Right ventricle myocardium inferior (tissue), 1 donor: ENCODE measurements at regions of chr9 and their contacts with region 1.

Region 1: DNA sequence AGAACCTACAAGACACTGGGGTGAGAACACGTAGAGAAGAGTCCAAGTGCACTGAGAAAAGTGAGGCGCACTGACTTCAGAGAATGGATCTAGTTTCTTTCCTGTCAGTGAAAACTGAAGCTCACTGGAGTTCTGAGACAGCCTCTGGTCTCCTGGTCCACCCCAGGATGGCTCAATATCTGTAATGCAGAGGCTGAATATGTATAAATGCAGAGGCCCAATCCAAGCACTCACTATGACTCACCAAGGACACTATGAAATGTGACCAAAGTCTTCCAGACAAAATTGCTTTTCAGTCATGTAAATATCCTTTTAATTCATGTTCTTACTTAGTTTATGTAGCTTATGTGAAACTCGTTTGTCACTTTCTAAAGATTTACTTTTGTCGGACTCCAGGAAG is 53.8 kb downstream of the NFIB start:
- DNase-seq: no peak
- ATAC-seq: no peak

Region 2: DNA sequence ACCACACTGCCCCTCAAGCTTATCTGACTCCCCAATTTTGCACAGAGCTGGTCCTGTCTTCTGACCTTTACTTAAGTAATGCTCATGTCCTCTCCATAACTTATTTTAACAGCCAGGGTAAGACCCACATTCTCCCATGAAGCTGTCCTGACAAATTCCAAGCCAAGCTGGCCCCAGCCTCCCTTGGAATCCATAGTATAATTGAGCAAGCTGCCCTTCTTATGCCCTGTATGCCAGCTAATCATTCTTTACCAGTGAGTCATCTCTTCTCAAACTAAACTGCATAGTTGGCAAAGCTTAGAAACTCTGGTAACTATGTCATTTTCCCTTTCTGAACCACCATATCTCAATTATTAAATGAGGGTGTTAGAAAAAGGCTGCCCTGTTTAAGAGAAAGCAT is 38.5 kb before region 1 on chr9:
- intact Hi-C with region 1: loop called (anchors 5 kb)
- DNase-seq: no peak
- ATAC-seq: peak; percentile 82